ENCODE measurements at regions of chr9 and their contacts with region 1.

Region 1: GRCh38 chr9:613771-614347 is 227.6 kb upstream of the DMRT1 start:
- DNase-seq: peak; percentile 63
- ATAC-seq: peak; percentile 86
- H3K4me3 Mint-ChIP-seq: no peak overlapping the region
- H3K27ac Mint-ChIP-seq: no peak overlapping the region
- H3K4me1 Mint-ChIP-seq: peaks cover 5% of the 10 kb centered on the region
- H3K27me3 Mint-ChIP-seq: no peaks in the 10 kb centered on the region

Region 2: DNA sequence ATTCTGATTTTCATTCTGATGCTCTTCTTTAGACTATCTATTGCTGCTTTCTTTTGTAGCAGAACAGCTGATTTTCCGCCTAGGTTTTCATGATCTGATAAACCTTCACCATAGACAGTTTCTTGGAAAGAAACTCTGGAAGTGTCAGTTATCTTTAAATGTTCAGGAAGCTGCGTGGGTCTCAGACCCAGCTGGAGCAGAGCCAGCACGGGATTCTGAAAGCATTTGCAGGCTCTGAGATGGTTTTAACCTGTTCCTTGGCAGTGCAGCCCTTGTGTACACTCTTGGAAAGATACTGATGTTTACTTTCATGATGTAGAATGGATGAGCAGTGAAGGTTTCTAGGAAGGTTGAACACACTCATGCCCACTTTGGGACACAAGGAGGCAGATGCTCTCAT is 49.7 kb after region 1 on chr9:
- CTCF ChIA-PET with region 1: no interaction called
- POLR2A ChIA-PET with region 1: no interaction called
- DNase-seq: no peak
- ATAC-seq: no peak
- H3K4me3 Mint-ChIP-seq: no peak overlapping the region
- H3K27ac Mint-ChIP-seq: no peak overlapping the region
- H3K4me1 Mint-ChIP-seq: peaks cover 2% of the 10 kb centered on the region
- H3K27me3 Mint-ChIP-seq: peaks cover 9% of the 10 kb centered on the region

Region 3: DNA sequence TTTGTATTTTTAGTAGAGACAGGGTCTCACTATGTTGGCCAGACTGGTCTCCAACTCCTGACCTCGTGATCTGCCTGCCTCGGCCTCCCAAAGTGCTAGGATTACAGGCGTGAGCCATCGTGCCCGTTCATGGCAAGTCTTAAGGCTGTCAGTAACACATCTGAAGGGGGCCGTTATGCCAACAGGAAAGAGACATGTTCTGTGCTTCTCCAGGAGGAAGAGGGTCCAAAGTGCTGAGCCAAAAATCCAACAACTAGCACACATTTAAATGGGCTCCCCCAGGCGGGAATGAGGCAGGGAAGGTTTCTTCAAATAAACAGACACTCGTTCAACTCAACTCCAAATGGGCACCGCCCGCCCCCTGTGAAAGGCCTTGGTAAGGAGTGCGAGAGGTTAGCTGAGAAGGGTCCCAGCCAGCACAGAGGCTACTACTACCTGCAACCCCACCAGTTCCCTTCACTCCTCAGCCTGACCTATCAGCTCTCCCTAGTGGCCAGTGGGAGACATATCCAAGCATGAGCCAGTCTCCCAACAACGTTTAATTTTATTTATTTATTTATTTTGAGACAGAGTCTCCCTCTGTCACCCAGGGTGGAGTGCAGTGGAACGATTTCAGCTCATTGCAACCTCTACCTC is 143.5 kb after region 1 on chr9:
- CTCF ChIA-PET with region 1: interaction called, 25 read pairs
- POLR2A ChIA-PET with region 1: no interaction called
- DNase-seq: peak; percentile 35
- ATAC-seq: peak; percentile 59
- H3K4me3 Mint-ChIP-seq: no peak overlapping the region
- H3K27ac Mint-ChIP-seq: no peak overlapping the region
- H3K4me1 Mint-ChIP-seq: peaks cover 53% of the 10 kb centered on the region
- H3K27me3 Mint-ChIP-seq: peaks cover 4% of the 10 kb centered on the region

Region 4: GRCh38 chr9:763692-764524 is 150.0 kb after region 1 on chr9:
- CTCF ChIA-PET with region 1: interaction called, 29 read pairs
- POLR2A ChIA-PET with region 1: no interaction called
- DNase-seq: peak; percentile 74
- ATAC-seq: peak; percentile 99
- H3K4me3 Mint-ChIP-seq: no peak overlapping the region
- H3K27ac Mint-ChIP-seq: no peak overlapping the region
- H3K4me1 Mint-ChIP-seq: peaks cover 22% of the 10 kb centered on the region
- H3K27me3 Mint-ChIP-seq: peaks cover 26% of the 10 kb centered on the region

Region 5: DNA sequence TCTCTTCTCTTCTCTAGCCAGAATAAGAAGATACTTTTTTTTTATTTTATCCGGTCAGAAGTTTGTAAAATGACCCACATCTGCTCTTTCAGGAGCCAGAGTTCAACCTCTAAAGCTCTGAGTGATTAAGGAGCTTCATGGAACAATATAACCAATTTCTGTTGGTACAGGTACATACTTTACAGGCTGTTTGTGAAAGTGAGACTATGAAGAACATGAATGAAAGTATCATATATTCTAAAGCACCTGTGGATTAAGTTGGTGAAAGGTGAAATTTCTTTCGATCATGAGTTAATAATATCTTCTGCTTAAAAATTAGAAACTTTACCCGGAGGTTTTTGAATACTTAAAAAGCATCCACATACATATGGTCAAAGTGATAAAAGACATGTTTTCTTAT is 501.5 kb after region 1 on chr9:
- CTCF ChIA-PET with region 1: no interaction called
- POLR2A ChIA-PET with region 1: no interaction called
- DNase-seq: no peak
- ATAC-seq: no peak
- H3K4me3 Mint-ChIP-seq: no peak overlapping the region
- H3K27ac Mint-ChIP-seq: no peak overlapping the region
- H3K4me1 Mint-ChIP-seq: no peaks in the 10 kb centered on the region
- H3K27me3 Mint-ChIP-seq: no peaks in the 10 kb centered on the region

Measured in activated CD8-positive, alpha-beta T cell treated with anti-CD3 and anti-CD28 coated beads, Interleukin-2, amount 10 ng/mL, durations not matched to agents 7 days and 5 days (primary cell).